ENCODE measurements at regions of chr12 and their contacts with region 1.

Region 1: GRCh38 chr12:58346032-58346632 is 404.8 kb downstream of the ATP23 start:
- DNase-seq: no peak
- H3K4me3 ChIP-seq: no peak overlapping the region
- H3K27ac ChIP-seq: no peak overlapping the region
- H3K4me1 ChIP-seq: no peaks in the 10 kb centered on the region
- H3K27me3 ChIP-seq: peaks cover 0 to 3% (median 0%) of the 10 kb centered on the region in 7 donors
- CTCF ChIP-seq: peak; percentile 49 to 81 (median 74)
- POLR2A ChIP-seq: no peak

Region 2: GRCh38 chr12:58067599-58068387 is 278.3 kb before region 1 on chr12:
- intact Hi-C with region 1: no loop called
- DNase-seq: no peak
- H3K4me3 ChIP-seq: no peak overlapping the region
- H3K27ac ChIP-seq: no peak overlapping the region
- H3K4me1 ChIP-seq: no peaks in the 10 kb centered on the region
- H3K27me3 ChIP-seq: no peaks in the 10 kb centered on the region
- CTCF ChIP-seq: no peak
- POLR2A ChIP-seq: no peak

Region 3: DNA sequence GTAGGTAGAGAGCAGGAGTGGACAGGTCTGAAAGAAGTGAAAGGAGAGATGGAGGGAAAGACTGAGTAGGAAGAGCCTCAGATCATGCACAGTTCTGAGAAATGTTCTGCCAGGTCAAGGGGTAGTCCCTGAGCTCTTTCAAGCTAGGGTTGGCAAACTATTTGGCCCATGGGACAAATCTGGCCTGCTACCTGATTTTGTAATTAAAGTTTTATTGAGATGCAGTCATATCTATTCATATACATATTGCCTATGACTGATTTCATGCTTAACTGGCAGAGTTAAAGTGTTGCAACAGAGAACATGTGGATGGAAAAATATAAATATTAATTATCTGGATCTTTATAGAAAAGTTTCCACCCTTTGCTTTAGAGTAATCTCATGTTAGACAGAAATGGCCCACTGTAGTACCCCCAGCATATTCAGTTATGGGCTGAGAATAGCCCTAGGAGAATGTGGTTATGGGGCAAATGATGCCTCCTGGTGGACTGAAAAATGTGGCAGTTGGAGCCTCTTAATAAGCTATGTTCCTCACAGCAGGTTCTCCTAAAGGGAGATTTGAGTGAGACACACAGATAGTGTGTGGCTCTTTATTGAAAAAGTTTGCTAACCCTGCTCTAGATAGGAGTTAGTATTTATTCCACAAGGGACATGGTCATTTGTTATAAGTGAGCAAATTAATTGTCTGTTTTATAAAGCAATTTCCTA is 97.3 kb after region 1 on chr12:
- intact Hi-C with region 1: loop called (anchors 10 kb)
- DNase-seq: no peak
- H3K4me3 ChIP-seq: no peak overlapping the region
- H3K27ac ChIP-seq: no peak overlapping the region
- H3K4me1 ChIP-seq: no peaks in the 10 kb centered on the region
- H3K27me3 ChIP-seq: no peaks in the 10 kb centered on the region
- CTCF ChIP-seq: peak in 8 of 11 experiments; percentile 6 to 55 (median 43)
- POLR2A ChIP-seq: no peak